PC-3 (cell line): ENCODE measurements at regions of chr16 and their contacts with region 1.

Region 1: GRCh38 chr16:74862741-74863244 is 88.2 kb upstream of the FA2H start:
- DNase-seq: peak; percentile 68
- ATAC-seq: peak; percentile 57
- H3K4me3 ChIP-seq: no peak overlapping the region
- H3K27ac ChIP-seq: no peak overlapping the region
- H3K4me1 ChIP-seq: no peaks in the 10 kb centered on the region
- H3K27me3 ChIP-seq: no peaks in the 10 kb centered on the region
- CTCF ChIP-seq: peak; percentile 86

Region 2: GRCh38 chr16:72963533-72964315 is 1899.1 kb before region 1 on chr16:
- CTCF ChIA-PET with region 1: no interaction called
- POLR2A ChIA-PET with region 1: interaction called, 24 read pairs
- intact Hi-C with region 1: no loop called
- DNase-seq: no peak
- ATAC-seq: no peak
- H3K4me3 ChIP-seq: no peak overlapping the region
- H3K27ac ChIP-seq: no peak overlapping the region
- H3K4me1 ChIP-seq: no peaks in the 10 kb centered on the region
- H3K27me3 ChIP-seq: no peaks in the 10 kb centered on the region
- CTCF ChIP-seq: no peak

Region 3: DNA sequence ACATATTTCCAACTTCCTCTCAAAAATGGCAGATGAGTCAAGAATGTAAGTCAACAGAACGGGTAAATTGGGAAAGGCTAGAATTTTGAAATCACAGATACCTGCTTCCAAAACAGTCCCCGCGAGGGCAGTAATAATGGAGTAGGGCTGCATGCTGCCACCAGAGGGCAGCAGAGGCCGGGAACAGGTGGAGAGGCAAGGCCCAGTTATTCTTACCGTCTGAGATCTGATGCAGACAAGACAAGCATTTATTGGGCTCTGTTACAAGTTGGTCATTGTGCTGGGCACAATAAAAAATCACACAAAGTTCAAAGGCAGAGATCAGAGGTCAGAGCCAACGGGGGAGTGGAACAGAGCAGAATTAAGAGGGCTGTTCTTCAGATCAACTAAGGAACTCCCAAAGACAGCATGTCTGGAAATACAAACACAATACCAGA is 153.3 kb before region 1 on chr16:
- CTCF ChIA-PET with region 1: no interaction called
- POLR2A ChIA-PET with region 1: no interaction called
- intact Hi-C with region 1: loop called (anchors 1 kb)
- DNase-seq: peak; percentile 90
- ATAC-seq: peak; percentile 97
- H3K4me3 ChIP-seq: no peak overlapping the region
- H3K27ac ChIP-seq: no peak overlapping the region; the same call in 1 of the 2 replicates
- H3K4me1 ChIP-seq: peaks cover 3% of the 10 kb centered on the region; the same call in 1 of the 2 replicates
- H3K27me3 ChIP-seq: no peaks in the 10 kb centered on the region
- CTCF ChIP-seq: peak; percentile 93

Region 4: GRCh38 chr16:74813109-74813641 is 49.6 kb before region 1 on chr16:
- CTCF ChIA-PET with region 1: interaction called, 15 read pairs
- POLR2A ChIA-PET with region 1: no interaction called
- intact Hi-C with region 1: loop called (anchors 1 kb)
- DNase-seq: peak; percentile 81
- ATAC-seq: peak; percentile 100
- H3K4me3 ChIP-seq: peak overlapping the region; percentile 26; the same call in 1 of the 2 replicates
- H3K27ac ChIP-seq: no peak overlapping the region
- H3K4me1 ChIP-seq: 0 out of 2 replicates have a peak, but pooled peaks cover 5% of the 10 kb centered on the region
- H3K27me3 ChIP-seq: no peaks in the 10 kb centered on the region
- CTCF ChIP-seq: peak; percentile 89

Region 5: GRCh38 chr16:74874912-74875546 is 12.2 kb after region 1 on chr16:
- CTCF ChIA-PET with region 1: no interaction called
- POLR2A ChIA-PET with region 1: no interaction called
- intact Hi-C with region 1: no loop called
- DNase-seq: no peak
- ATAC-seq: no peak; the same call in 1 of the 2 replicates
- H3K4me3 ChIP-seq: no peak overlapping the region
- H3K27ac ChIP-seq: no peak overlapping the region
- H3K4me1 ChIP-seq: no peaks in the 10 kb centered on the region
- H3K27me3 ChIP-seq: no peaks in the 10 kb centered on the region
- CTCF ChIP-seq: no peak